Left ventricle myocardium inferior (tissue), 1 donor: ENCODE measurements at regions of chr7 and their contacts with region 1.

Region 1: GRCh38 chr7:16564909-16565426 is 38.3 kb downstream of the LRRC72 start:
- DNase-seq: no peak
- H3K4me3 ChIP-seq: no peak overlapping the region
- H3K27ac ChIP-seq: no peak overlapping the region
- H3K4me1 ChIP-seq: peaks cover under 1% of the 10 kb centered on the region
- H3K27me3 ChIP-seq: no peaks in the 10 kb centered on the region
- CTCF ChIP-seq: peak; percentile 87

Region 2: DNA sequence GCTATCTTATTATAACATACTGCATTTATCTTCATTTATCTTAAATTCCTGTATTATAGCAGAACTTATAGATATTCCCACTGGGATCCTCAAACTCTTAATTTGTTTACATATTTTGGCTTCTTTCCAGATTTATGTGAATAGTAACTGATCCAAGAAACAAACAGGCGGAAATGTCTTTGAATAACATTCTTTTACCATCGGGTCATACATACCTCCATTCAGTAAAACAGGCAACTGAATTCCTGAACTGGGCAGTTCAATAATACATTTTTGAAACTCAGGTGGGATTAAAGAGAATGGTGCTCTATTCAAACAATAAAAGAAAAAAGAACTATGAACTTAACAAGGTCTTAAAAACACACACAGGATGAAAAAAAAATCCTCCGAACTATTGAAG is 481.0 kb before region 1 on chr7:
- intact Hi-C with region 1: loop called (anchors 5 kb)
- DNase-seq: no peak
- H3K4me3 ChIP-seq: no peak overlapping the region
- H3K27ac ChIP-seq: peak overlapping the region; percentile 59
- H3K4me1 ChIP-seq: no peaks in the 10 kb centered on the region
- H3K27me3 ChIP-seq: no peaks in the 10 kb centered on the region
- CTCF ChIP-seq: no peak

Region 3: GRCh38 chr7:16114633-16115032 is 450.3 kb before region 1 on chr7:
- intact Hi-C with region 1: loop called (anchors 10 kb)
- DNase-seq: no peak
- H3K4me3 ChIP-seq: no peak overlapping the region
- H3K27ac ChIP-seq: no peak overlapping the region
- H3K4me1 ChIP-seq: no peaks in the 10 kb centered on the region
- H3K27me3 ChIP-seq: no peaks in the 10 kb centered on the region
- CTCF ChIP-seq: peak; percentile 62

Region 4: DNA sequence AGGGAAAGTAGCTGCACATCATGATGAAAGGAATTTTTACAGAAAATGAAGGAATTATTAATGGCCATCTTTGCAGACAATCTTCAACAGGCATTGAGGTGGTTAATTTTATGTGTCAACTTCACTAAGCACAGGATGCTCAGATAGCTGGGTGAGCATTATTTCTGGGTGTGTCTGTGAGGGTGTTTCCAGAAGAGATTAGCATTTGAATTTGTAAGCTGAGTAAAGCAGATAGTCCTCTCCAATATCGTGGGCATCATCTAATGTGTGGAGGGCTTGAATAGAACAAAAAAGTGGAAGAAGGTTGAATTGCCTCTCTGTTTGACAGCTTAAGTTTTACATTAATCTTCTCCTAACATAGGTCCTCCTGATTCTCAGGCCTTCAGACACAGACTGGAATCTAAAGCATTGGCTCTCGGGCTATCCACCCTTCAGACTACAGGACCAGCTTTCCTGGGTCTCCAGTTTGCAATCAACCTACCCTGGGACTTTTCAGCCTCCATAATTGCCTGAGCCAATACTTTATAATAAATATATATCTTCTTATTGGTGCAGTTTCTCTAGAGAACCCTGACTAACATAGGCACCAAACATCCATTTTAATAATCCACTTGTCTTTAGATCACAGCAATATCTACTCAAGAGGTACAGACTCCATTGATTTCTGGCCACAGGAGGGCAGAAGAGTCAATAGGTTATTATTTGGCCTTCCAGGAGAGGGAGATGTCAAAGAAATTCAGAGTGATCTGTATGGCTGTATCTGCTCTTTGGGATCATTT is 133.1 kb before region 1 on chr7:
- intact Hi-C with region 1: loop called (anchors 10 kb)
- DNase-seq: no peak
- H3K4me3 ChIP-seq: no peak overlapping the region
- H3K27ac ChIP-seq: no peak overlapping the region
- H3K4me1 ChIP-seq: no peaks in the 10 kb centered on the region
- H3K27me3 ChIP-seq: no peaks in the 10 kb centered on the region
- CTCF ChIP-seq: peak; percentile 72